ENCODE measurements at regions of chr16 and their contacts with region 1.

Region 1: DNA sequence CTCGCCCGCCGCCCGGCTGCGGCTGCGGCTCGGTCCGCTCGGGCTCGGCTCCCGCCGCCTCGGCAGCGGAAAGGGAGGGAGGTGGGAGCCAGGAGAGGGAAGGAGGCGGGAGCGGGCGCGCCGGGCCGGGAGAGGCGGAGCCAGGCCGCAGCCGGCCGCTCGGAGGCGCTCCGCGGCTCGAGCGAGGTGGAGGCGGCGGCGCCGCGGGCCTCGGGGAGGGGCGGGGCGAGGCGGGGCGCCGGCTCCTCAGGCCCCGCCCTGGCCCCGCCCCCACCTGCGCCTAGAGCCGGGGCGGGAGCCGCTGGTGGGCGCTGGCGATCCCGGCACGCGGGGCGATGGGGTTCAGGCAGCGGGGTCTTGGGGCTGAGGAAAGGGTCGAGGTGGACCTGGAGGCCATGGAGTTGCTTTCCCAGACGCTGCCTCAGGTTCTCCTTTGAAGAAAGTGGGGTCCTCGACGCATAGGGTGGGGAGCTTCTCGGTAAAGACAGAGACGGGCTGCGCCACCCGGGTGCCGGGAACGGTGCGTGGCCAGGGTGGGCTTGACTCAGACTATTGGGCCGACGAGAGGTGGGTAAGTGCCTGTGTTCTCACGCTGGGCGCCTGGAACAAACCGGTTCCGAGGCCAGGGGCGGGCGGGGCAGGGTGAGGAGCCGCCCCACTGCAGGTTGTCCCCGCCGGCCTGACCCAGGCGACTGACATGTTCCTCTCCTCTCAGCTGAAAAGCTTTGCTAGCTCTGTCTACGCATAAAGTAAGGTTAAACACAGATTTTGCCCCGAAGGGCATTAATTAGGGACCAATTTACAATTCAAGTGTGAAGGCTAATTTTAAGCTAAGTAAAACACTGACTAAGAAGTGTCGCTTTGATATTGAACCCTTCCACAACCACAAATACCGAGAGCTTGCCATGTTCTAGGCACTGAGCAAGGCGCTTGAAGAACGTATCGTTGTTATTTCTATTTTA is at the start of gene CMTM4:
- H3K4me3 Mint-ChIP-seq: peak within 1 kb of the TSS; percentile 82
- H3K27ac Mint-ChIP-seq: peak within 1 kb of the TSS; percentile 72
- H3K4me1 Mint-ChIP-seq: peaks cover 35% of the 10 kb centered on the region
- H3K27me3 Mint-ChIP-seq: peaks cover 4% of the 10 kb centered on the region

Region 2: DNA sequence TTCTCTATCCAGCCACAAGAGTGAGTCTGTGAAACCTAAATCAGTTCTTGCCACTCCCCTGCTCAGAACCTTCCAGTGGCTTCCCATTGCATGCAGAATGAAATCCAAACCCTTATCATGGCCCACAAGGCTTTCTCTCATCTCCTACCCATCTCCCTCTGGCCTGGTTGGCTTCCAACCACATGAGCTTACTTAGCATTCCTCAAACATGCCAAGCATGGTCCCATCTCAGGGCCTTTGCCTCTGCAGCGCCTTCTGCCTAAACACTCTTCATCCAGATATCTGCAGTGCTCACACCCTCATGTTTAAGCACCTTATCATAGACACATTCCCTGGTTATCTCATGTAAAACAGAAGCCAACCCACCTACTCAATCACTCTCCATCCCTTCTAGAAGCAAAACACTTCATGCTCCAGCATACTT is 162.6 kb before region 1 on chr16:
- intact Hi-C with region 1: no loop called
- H3K4me3 Mint-ChIP-seq: no peak overlapping the region
- H3K27ac Mint-ChIP-seq: no peak overlapping the region
- H3K4me1 Mint-ChIP-seq: peaks cover 25% of the 10 kb centered on the region
- H3K27me3 Mint-ChIP-seq: no peaks in the 10 kb centered on the region

Region 3: DNA sequence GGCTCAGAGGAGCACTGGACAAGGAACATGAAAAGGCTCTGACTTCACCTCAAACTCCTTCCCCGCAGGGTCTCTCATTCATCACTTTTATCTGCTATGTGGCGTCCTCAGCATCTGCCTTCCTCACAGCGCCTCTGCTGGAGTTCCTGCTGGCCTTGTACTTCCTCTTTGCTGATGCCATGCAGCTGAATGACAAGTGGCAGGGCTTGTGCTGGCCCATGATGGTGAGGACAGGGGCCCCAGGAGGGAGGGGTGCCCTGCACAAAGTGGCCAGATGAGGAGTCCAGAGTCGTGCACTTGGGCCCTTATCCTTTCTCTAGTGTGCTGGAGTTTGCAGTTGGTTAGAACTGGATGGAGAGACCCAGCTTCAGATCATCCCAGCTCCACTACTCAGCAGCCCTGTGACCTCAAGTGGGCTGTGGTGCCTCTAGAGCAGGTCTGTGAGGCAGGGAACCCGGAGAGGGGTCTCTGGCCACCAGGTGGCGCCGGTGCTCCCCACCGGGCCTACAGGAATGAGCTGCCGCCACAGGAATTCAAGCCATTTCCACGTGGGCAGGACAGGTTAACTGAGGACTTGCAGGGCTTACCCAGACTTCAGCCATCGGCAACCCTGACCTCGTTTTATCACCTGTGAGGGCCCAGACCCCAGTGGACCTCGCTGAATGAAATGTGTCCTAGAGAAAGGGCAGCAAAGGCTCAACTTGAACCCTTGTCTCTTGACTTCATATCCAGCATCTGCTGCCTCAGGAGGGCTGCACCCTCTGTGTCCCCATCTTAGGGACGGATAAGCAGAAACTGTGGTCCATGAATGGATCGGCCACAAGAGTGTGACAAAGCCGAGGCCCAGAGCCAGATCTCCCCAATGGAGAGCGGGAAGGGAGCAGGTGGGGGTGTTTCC is 88.5 kb before region 1 on chr16:
- intact Hi-C with region 1: loop called (anchors 5 kb)
- H3K4me3 Mint-ChIP-seq: no peak overlapping the region
- H3K27ac Mint-ChIP-seq: peak overlapping the region; percentile 66
- H3K4me1 Mint-ChIP-seq: peaks cover 40% of the 10 kb centered on the region
- H3K27me3 Mint-ChIP-seq: peaks cover 8% of the 10 kb centered on the region

Region 4: GRCh38 chr16:66660422-66661209 is 36.3 kb before region 1 on chr16:
- intact Hi-C with region 1: loop called (anchors 5 kb)
- H3K4me3 Mint-ChIP-seq: no peak overlapping the region
- H3K27ac Mint-ChIP-seq: peak overlapping the region; percentile 45
- H3K4me1 Mint-ChIP-seq: peaks cover 45% of the 10 kb centered on the region
- H3K27me3 Mint-ChIP-seq: no peaks in the 10 kb centered on the region

Region 5: GRCh38 chr16:66682271-66682670 is 14.7 kb before region 1 on chr16:
- intact Hi-C with region 1: no loop called
- H3K4me3 Mint-ChIP-seq: no peak overlapping the region
- H3K27ac Mint-ChIP-seq: no peak overlapping the region
- H3K4me1 Mint-ChIP-seq: peaks cover 6% of the 10 kb centered on the region
- H3K27me3 Mint-ChIP-seq: no peaks in the 10 kb centered on the region